Gastrocnemius medialis (tissue), 4 donors: ENCODE measurements at regions of chr2 and their contacts with region 1.

Region 1: GRCh38 chr2:38740851-38741731 is 10.1 kb downstream of the SRSF7 start:
- DNase-seq: no peak
- ATAC-seq: peak in 1 of 2 donors; percentile 39
- H3K4me3 ChIP-seq: no peak overlapping the region
- H3K27ac ChIP-seq: peak overlapping the region; percentile 25 to 77 (median 52)
- H3K4me1 ChIP-seq: peaks cover 8 to 28% of the 10 kb centered on the region in 2 donors
- H3K27me3 ChIP-seq: no peaks in the 10 kb centered on the region
- CTCF ChIP-seq: peak; percentile 55 to 78 (median 67)
- POLR2A ChIP-seq: no peak

Region 2: DNA sequence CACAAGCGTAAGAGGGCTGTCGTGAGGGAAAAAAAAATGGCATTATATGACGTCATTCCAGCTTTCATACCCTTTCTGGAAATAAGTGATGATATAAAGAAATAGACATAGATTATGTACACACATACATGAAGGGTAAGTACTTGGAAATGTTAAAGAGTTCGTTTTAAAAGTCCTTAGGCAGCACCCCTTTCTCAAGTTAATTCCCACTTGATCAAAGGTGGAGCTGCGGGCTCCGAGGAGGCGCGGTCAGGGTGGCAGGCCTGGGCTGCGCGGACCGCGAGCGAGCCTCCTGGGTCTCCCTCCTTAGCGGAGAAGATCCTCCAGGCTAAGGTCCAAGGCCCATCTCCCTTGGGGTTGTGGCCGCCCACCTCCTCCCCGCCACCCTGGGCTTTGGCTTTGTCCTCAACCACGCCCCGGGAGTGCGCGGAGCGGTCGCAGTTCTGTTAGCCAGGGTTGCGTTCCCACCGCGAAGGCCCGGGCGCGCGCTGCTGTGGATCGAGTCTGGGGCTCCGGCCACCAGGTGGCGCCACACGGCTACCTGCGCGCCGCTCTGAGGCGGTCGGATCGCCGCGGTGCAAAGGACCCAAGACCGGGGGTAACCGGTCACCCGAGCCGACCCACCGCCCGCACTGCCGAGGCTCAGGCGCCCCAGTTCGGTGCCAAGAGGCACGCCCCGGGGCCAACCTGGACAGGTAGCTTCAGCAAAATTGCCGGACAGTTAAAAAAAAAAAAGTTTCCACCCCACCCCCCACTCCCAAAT is 205.2 kb before region 1 on chr2:
- in situ Hi-C with region 1: no loop called
- intact Hi-C with region 1: loop called (anchors 5 kb)
- DNase-seq: peak; percentile 52 to 64
- ATAC-seq: peak; percentile 86 to 90
- H3K4me3 ChIP-seq: peak overlapping the region; percentile 54 to 75 (median 55)
- H3K27ac ChIP-seq: peak overlapping the region in 2 of 4 donors; percentile 51 to 55
- H3K4me1 ChIP-seq: no peaks in the 10 kb centered on the region
- H3K27me3 ChIP-seq: no peaks in the 10 kb centered on the region
- CTCF ChIP-seq: peak; percentile 79 to 95 (median 92)
- POLR2A ChIP-seq: no peak

Region 3: GRCh38 chr2:38581193-38582147 is 159.6 kb before region 1 on chr2:
- in situ Hi-C with region 1: loop called in 3 of 4 experiments (anchors 5 to 10 kb)
- intact Hi-C with region 1: loop called (anchors 2 kb)
- DNase-seq: no peak
- ATAC-seq: peak; percentile 76 to 88
- H3K4me3 ChIP-seq: no peak overlapping the region
- H3K27ac ChIP-seq: peak overlapping the region in 1 of 4 donors; percentile 2
- H3K4me1 ChIP-seq: peaks cover 2 to 17% of the 10 kb centered on the region in 2 donors
- H3K27me3 ChIP-seq: no peaks in the 10 kb centered on the region
- CTCF ChIP-seq: peak; percentile 68 to 81 (median 70)
- POLR2A ChIP-seq: no peak

Region 4: DNA sequence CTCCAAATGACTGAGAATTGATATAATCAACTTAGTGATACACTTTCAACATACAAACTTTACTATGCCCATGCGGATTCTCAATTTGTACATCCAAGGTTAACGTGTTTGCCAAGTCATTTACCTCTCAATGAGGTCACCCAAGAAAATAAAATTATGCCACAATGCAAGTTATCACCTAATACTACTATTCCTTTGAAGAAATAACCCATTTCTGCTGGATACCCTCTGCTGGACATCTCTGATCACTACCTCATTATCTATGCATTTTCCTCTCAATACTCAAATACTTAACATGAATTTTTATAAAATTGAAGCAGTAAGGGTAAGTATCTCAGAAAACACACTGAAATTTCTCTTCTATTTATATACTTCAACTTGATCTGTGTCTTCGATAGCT is 151.0 kb before region 1 on chr2:
- in situ Hi-C with region 1: loop called in 3 of 4 experiments (anchors 5 to 10 kb)
- intact Hi-C with region 1: no loop called
- DNase-seq: no peak
- ATAC-seq: no peak
- H3K4me3 ChIP-seq: no peak overlapping the region
- H3K27ac ChIP-seq: peak overlapping the region; percentile 77 to 98 (median 90)
- H3K4me1 ChIP-seq: peaks cover 67 to 88% of the 10 kb centered on the region in 2 donors
- H3K27me3 ChIP-seq: no peaks in the 10 kb centered on the region
- CTCF ChIP-seq: no peak
- POLR2A ChIP-seq: no peak

Region 5: DNA sequence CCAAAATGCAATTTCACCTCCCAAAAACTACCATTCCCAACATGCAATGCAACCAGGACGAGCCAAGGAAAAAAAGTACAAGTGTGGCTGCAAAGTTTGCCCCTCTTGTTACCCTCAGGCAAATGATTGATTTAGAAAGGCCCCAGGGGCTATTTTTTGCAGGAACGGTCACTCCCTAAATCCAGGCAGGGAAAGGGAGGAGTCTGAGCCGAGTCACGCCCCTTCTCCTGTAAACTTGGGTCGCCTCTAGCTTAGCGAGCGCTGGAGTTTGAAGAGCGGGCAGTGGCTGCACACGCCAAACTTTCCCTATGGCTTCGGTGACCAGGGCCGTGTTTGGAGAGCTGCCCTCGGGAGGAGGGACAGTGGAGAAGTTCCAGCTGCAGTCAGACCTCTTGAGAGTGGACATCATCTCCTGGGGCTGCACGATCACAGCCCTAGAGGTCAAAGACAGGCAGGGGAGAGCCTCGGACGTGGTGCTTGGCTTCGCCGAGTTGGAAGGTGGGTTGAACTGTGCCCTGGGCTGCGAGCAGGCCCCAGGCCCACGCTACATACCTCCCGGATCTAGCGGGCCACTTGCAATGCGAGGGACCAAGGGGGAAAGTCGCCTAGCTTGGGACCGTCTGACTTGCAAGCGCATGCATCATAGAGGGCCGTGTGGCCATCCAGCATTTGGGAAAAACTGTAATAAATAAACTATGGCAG is 75.1 kb before region 1 on chr2 and contains the start of gene GALM:
- in situ Hi-C with region 1: no loop called
- intact Hi-C with region 1: loop called (anchors 5 kb)
- DNase-seq: peak; percentile 79 to 89
- ATAC-seq: peak; percentile 81 to 96
- H3K4me3 ChIP-seq: peak within 1 kb of the TSS; percentile 63 to 76 (median 75)
- H3K27ac ChIP-seq: peak within 1 kb of the TSS; percentile 73 to 81 (median 78)
- H3K4me1 ChIP-seq: peaks cover 13 to 23% of the 10 kb centered on the region in 2 donors
- H3K27me3 ChIP-seq: no peaks in the 10 kb centered on the region
- CTCF ChIP-seq: no peak
- POLR2A ChIP-seq: peak; percentile 38 to 70
- total RNA-seq, gene GALM: 5.3 to 16.9 (median 14.9) TPM

Region 6: DNA sequence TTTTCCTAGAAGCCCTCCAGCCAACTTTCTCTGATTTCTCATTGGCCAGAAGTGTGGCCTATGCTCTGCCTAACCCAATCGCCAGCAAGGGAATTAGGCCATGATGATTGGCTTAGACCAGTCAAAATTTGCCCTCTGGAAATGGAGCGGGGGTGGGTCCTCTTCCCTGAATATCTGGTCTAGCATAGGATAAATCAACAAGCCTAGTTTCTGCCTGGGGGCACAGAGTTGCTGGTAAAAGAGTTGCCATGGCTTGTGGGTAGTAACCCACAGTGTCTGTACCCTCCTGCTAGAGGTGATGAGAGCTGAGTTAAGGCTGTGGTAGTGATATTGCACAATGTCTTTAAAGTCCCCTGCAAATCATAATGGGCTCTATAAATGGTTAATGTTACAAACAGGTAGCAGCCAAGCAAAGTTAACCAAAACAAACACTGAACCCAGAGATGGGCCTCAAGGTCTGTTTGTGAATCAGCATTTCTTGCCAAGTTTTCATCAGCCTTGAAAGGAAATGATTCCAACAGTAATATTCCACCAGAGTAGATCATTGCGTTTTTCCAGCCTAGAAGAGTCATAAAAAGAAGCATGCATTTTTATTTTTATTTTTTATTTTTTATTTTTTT is 55.9 kb before region 1 on chr2:
- in situ Hi-C with region 1: no loop called
- intact Hi-C with region 1: no loop called
- DNase-seq: no peak
- ATAC-seq: no peak
- H3K4me3 ChIP-seq: no peak overlapping the region
- H3K27ac ChIP-seq: no peak overlapping the region
- H3K4me1 ChIP-seq: no peaks in the 10 kb centered on the region
- H3K27me3 ChIP-seq: no peaks in the 10 kb centered on the region
- CTCF ChIP-seq: no peak
- POLR2A ChIP-seq: no peak